ENCODE measurements at regions of chr21 and their contacts with region 1.

Region 1: DNA sequence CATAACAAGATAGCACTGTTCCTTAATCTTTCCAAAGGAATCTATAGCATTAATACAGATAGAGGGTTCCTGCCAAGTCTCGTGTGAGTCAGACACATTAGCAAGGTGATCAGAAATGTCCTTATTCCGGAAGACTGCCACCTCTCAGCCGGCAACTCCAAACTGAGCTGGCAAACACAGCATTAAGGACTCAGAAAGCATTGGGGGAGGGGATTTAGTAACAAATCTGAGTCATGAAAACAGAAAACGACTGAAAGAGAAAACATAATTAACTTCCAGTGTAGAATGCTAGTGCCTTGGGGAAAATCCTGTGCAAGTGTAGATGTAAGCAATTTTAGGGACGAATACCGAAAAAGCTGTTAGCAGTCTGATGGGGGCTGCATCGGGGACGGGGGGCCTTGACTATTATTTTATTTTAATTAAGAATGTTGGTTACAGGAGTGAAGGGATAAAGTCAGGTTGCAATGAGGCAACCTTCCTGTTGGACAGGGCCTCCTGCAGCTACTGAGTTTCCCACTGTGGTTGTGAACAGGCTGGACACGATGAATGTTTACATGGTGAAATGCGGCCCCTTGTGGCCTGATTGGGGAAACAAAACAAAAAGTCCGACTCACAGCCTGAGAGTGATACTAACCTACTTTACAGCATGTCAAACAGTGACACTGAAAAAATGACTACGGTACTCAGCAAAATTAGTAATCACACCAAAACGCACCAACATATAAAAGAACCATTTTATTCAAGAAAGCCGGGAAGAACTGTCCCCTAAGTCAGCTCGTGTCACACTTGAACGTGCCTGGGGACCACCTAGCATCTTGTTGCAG is 20.7 kb downstream of the MIS18A start:
- DNase-seq: peak; percentile 67
- ATAC-seq: peak; percentile 70
- H3K4me3 Mint-ChIP-seq: no peak overlapping the region
- H3K27ac Mint-ChIP-seq: no peak overlapping the region
- H3K4me1 Mint-ChIP-seq: peaks cover 1% of the 10 kb centered on the region
- H3K27me3 Mint-ChIP-seq: peaks cover 7% of the 10 kb centered on the region

Region 2: DNA sequence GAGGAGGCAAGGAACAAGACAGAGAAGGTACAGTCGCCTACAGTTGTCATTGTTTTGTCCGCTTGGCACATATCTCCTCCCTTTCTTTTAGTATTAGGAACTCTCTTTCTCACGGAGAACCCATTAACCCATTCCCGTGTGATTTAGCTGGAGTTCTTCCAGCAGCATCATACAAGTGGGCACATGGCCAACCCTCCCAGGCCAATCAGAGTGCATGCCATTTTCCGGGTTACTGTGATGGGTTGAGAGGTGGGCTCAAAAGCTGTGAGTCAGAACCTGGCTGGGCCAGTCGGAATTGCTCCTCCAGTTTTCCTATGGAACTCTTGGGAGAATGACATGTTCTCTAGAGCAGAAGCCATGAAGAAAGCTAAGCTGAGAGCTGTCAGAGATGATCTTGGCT is 681.7 kb before region 1 on chr21:
- CTCF ChIA-PET with region 1: no interaction called
- POLR2A ChIA-PET with region 1: no interaction called
- intact Hi-C with region 1: no loop called
- DNase-seq: no peak
- ATAC-seq: no peak
- H3K4me3 Mint-ChIP-seq: no peak overlapping the region
- H3K27ac Mint-ChIP-seq: no peak overlapping the region
- H3K4me1 Mint-ChIP-seq: no peaks in the 10 kb centered on the region
- H3K27me3 Mint-ChIP-seq: peaks cover 3% of the 10 kb centered on the region

Region 3: DNA sequence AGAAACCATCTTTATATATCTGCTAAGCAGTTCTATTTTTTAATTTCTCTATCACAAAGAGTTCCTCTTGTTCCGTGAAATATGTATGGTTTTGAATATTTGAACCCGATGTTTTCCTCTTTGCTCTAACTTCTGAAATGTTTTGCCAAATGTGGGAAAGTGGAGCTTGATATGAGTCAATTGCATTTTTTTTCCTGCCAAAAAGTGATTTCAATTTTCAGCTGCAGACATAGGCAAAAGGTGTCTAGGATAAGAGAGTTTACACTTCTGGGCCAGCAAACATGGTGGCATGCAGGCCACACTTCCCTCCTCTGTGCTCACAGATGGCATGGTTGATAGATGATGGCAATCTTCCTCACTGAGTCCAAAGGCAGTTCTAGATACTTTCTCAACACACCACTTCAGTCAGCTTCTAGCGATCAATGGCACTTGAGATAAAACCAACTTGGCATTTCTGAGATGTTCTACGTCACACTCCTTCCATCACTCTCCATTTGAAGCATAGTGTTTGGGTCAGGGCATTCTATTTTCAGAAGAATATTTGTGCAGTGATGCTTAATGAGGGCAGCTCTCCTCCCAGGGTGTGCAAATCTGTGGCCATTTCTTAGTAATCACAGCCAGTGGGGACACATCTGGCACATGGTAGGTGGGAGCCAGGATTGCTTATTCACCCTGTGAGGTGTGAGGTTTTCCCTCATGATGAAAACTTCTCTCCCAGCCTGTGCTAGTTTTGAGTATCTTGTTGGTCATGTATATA is 471.8 kb before region 1 on chr21:
- CTCF ChIA-PET with region 1: interaction called, 5 read pairs
- POLR2A ChIA-PET with region 1: no interaction called
- intact Hi-C with region 1: loop called in 1 of 2 experiments (anchors 1 kb)
- DNase-seq: no peak
- ATAC-seq: no peak
- H3K4me3 Mint-ChIP-seq: no peak overlapping the region
- H3K27ac Mint-ChIP-seq: no peak overlapping the region
- H3K4me1 Mint-ChIP-seq: peaks cover 4% of the 10 kb centered on the region
- H3K27me3 Mint-ChIP-seq: peaks cover 12% of the 10 kb centered on the region

Region 4: DNA sequence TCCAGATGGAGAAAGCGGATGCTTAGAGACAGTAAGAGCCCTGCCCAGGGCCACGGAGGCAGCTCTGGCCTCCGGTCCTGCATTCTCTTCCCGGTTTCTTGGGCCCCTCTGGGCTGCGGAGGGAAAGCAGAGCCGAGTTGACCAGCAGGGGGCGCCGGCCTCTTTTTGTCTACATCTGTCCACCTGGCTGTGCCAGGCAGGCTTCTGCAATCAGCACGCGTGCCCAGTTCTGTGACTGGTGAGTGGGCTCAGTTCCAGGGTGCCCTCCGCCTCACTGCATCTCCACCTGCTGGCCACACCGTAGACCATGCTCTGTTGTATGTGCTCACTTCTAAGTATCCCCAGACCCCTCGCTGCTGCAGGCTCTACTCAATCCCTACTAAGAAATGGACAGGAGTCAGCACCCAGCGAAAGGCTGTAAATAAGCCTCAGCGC is 392.1 kb before region 1 on chr21:
- CTCF ChIA-PET with region 1: interaction called, 4 read pairs
- POLR2A ChIA-PET with region 1: no interaction called
- intact Hi-C with region 1: loop called (anchors 1 kb)
- DNase-seq: peak; percentile 88
- ATAC-seq: peak; percentile 83
- H3K4me3 Mint-ChIP-seq: no peak overlapping the region
- H3K27ac Mint-ChIP-seq: no peak overlapping the region
- H3K4me1 Mint-ChIP-seq: no peaks in the 10 kb centered on the region
- H3K27me3 Mint-ChIP-seq: peaks cover 24% of the 10 kb centered on the region

Region 5: GRCh38 chr21:31988492-31989290 is 269.5 kb before region 1 on chr21:
- CTCF ChIA-PET with region 1: no interaction called
- POLR2A ChIA-PET with region 1: no interaction called
- intact Hi-C with region 1: loop called in 1 of 2 experiments (anchors 10 kb)
- DNase-seq: no peak
- ATAC-seq: no peak
- H3K4me3 Mint-ChIP-seq: no peak overlapping the region
- H3K27ac Mint-ChIP-seq: no peak overlapping the region
- H3K4me1 Mint-ChIP-seq: no peaks in the 10 kb centered on the region
- H3K27me3 Mint-ChIP-seq: peaks cover 11% of the 10 kb centered on the region

Region 6: DNA sequence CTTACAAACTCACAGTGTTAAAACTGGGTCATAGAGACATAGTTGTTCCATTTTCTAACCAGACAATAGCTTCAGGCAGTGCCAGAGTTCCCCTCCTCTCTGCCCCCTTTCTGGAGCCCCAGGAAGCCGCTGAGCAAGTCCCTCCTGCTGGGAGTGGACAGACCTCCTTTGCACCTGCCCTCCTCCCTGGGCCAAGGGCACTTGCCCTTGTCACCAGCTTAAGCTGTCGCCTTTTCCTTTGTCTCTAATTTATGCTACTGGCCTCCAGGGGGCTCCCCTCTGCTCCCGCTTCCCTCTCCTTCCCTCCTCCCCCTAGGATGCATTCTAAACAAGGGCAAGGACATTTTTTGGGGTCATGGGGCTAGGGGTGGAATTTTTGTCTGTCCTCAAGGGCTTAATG is 161.8 kb before region 1 on chr21:
- CTCF ChIA-PET with region 1: interaction called, 4 read pairs
- POLR2A ChIA-PET with region 1: no interaction called
- intact Hi-C with region 1: loop called in 1 of 2 experiments (anchors 5 kb)
- DNase-seq: peak; percentile 28
- ATAC-seq: no peak
- H3K4me3 Mint-ChIP-seq: no peak overlapping the region
- H3K27ac Mint-ChIP-seq: no peak overlapping the region
- H3K4me1 Mint-ChIP-seq: no peaks in the 10 kb centered on the region
- H3K27me3 Mint-ChIP-seq: peaks cover 13% of the 10 kb centered on the region